CD8-positive, alpha-beta T cell (primary cell): ENCODE measurements at regions of chr5 and their contacts with region 1.

Region 1: DNA sequence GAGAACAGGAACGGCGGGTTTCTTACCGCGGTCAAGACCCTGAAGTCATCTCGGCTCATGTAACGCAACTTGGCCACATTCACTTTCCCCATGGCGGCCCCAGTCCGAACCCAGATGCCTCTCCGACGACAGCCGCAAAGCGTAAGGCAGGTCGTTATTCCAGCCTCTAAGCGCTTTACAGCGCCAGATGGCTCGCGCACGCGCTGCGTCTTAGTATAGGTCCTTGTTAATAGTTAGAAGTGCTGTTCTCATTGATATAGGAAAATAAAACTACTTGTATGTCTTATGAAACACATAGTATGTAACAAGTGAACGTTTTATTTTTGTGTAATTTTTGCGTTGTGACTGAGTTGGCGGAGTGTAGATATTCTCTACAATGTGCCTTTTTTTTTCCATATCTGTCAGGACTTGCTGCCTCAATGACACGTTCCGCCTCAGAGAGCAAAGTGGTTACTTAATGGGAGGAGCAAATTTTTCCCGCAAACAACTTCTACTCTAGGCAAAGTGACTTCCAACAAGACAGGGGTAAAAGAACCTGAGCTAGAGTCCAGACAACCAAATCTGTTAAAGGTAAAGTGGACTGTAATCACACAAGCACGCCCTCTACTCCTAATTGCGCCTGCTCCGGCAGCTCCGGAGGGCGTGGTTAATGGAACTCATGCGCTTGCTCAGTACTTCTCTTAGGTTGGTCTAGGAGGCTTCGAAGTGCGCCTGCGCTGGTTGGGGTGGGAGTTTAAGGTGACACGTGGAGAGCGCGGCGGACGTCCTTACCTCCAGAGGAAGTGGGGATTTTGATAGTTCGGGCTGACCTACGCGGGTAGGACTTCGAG is at the start of gene RIOK2:
- DNase-seq: peak; percentile 81 to 96 (median 91)
- ATAC-seq: peak; percentile 90
- H3K4me3 ChIP-seq: peak within 1 kb of the TSS; percentile 50 to 89
- H3K4me3 Mint-ChIP-seq: peak within 1 kb of the TSS; percentile 96
- H3K27ac ChIP-seq: peak within 1 kb of the TSS; percentile 89 to 98
- H3K27ac Mint-ChIP-seq: peak within 1 kb of the TSS; percentile 100
- H3K4me1 ChIP-seq: peaks cover 13% of the 10 kb centered on the region
- H3K4me1 Mint-ChIP-seq: peaks cover 38% of the 10 kb centered on the region
- H3K27me3 ChIP-seq: no peaks in the 10 kb centered on the region
- H3K27me3 Mint-ChIP-seq: no peaks in the 10 kb centered on the region
- CTCF ChIP-seq: no peak
- total RNA-seq, gene RIOK2: 29.2 to 29.6 TPM

Region 2: GRCh38 chr5:95554647-95555548 is 1628.4 kb before region 1 on chr5 and contains the starts of genes ARSK and SKIC3:
- CTCF ChIA-PET with region 1: no interaction called
- POLR2A ChIA-PET with region 1: no interaction called
- intact Hi-C with region 1: loop called (anchors 5 kb)
- DNase-seq: peak; percentile 80 to 99 (median 91)
- ATAC-seq: peak; percentile 86
- H3K4me3 ChIP-seq: peak within 1 kb of the TSS; percentile 64 to 77
- H3K4me3 Mint-ChIP-seq: peak within 1 kb of the TSS; percentile 96
- H3K27ac ChIP-seq: peak within 1 kb of the TSS; percentile 74 to 84
- H3K27ac Mint-ChIP-seq: peak within 1 kb of the TSS; percentile 98
- H3K4me1 ChIP-seq: peaks cover 18% of the 10 kb centered on the region
- H3K4me1 Mint-ChIP-seq: peaks cover 47% of the 10 kb centered on the region
- H3K27me3 ChIP-seq: no peaks in the 10 kb centered on the region
- H3K27me3 Mint-ChIP-seq: no peaks in the 10 kb centered on the region
- CTCF ChIP-seq: no peak
- total RNA-seq, gene ARSK: 2.6 to 3.1 TPM
- total RNA-seq, gene SKIC3: 46.7 to 51.8 TPM

Region 3: GRCh38 chr5:95646554-95647431 is 1536.5 kb before region 1 on chr5 and contains the start of gene RFESD:
- CTCF ChIA-PET with region 1: no interaction called
- POLR2A ChIA-PET with region 1: no interaction called
- intact Hi-C with region 1: loop called in 1 of 2 experiments (anchors 10 kb)
- DNase-seq: peak; percentile 86 to 96 (median 93)
- ATAC-seq: peak; percentile 93
- H3K4me3 ChIP-seq: peak within 1 kb of the TSS; percentile 67 to 77
- H3K4me3 Mint-ChIP-seq: peak within 1 kb of the TSS; percentile 91
- H3K27ac ChIP-seq: peak within 1 kb of the TSS; percentile 76 to 85
- H3K27ac Mint-ChIP-seq: peak within 1 kb of the TSS; percentile 94
- H3K4me1 ChIP-seq: peaks cover 20% of the 10 kb centered on the region
- H3K4me1 Mint-ChIP-seq: peaks cover 40% of the 10 kb centered on the region
- H3K27me3 ChIP-seq: no peaks in the 10 kb centered on the region
- H3K27me3 Mint-ChIP-seq: no peaks in the 10 kb centered on the region
- CTCF ChIP-seq: peak; percentile 22
- total RNA-seq, gene RFESD: 1.00 to 1.7 TPM

Region 4: DNA sequence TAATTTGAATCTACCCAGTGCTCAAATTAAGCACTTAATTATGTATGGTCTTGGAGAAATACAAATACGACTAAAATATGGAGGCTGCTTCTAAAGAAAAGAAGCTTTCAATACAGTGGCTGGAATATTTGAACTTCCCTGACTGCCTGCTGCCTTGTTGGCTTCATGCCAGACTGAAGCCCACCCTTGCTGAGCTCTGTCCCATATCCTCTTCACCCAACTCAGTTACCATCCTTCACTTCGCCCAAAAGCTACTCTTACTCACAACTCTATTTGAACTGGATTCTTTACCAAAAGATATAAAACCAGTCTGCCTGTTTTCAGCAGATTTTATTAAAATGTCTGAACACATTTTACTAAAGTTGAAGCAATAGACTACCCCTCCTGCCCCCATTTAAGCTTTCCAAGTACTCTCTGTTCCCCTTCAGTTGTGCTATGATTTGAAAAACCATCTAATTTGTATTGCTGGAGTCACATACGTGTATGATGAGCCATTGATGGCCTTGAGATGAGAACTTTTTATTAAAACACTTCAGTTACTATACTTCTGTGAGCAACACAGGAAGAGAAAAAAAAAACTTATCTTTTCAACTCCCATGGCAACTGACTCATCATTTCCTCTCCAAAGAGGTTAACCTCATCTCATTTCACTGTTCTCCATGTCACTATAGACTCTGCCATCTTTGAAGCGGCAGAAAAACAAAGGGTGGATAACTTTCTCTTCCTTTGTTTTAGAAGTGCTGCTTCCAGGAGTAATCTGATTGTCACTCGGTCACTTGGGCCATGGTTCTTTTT is 646.1 kb before region 1 on chr5:
- CTCF ChIA-PET with region 1: no interaction called
- POLR2A ChIA-PET with region 1: no interaction called
- intact Hi-C with region 1: loop called in 1 of 2 experiments (anchors 10 kb)
- DNase-seq: peak in 2 of 9 experiments; percentile 73 to 83
- ATAC-seq: peak; percentile 87
- H3K4me3 ChIP-seq: peak overlapping the region in 1 of 2 experiments; percentile 6
- H3K4me3 Mint-ChIP-seq: peak overlapping the region; percentile 46
- H3K27ac ChIP-seq: peak overlapping the region; percentile 10 to 55
- H3K27ac Mint-ChIP-seq: peak overlapping the region; percentile 81
- H3K4me1 ChIP-seq: peaks cover 24% of the 10 kb centered on the region
- H3K4me1 Mint-ChIP-seq: peaks cover 27% of the 10 kb centered on the region
- H3K27me3 ChIP-seq: no peaks in the 10 kb centered on the region
- H3K27me3 Mint-ChIP-seq: no peaks in the 10 kb centered on the region
- CTCF ChIP-seq: no peak

Region 5: DNA sequence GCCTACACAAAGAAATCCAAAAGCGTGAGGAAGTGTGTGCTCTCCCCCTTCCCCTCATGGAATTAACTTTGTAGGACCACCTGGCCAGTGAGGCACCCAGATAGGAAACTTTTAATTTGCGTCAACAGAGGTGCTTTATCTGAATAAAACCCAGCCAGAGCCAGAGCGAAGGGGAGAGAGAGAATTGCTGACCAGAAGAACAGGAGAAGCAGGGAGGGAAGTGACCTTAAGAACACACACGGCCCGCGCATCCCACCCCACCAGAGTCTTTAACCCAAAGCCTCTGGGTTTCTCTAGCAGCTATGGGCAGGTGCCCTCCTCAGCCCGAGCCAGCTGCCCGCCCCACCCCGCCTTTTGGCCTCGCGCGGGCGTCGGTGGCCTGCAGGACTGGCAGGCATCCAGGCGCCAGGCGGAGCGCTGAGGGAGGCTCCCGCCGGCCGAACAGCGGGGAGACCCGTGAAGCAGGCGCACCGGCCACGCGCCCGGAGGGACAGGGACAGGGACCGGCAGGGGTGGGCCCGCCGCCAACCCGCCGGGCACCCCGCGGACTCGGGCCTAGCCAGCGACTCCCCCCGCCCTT is 376.1 kb before region 1 on chr5:
- CTCF ChIA-PET with region 1: interaction called, 4 read pairs
- POLR2A ChIA-PET with region 1: interaction called, 5 read pairs
- intact Hi-C with region 1: loop called (anchors 1 to 5 kb)
- DNase-seq: peak in 2 of 9 experiments; percentile 9 to 32
- ATAC-seq: no peak
- H3K4me3 ChIP-seq: peak overlapping the region; percentile 71 to 85
- H3K4me3 Mint-ChIP-seq: peak overlapping the region; percentile 95
- H3K27ac ChIP-seq: peak overlapping the region; percentile 93 to 96
- H3K27ac Mint-ChIP-seq: peak overlapping the region; percentile 98
- H3K4me1 ChIP-seq: peaks cover 70% of the 10 kb centered on the region
- H3K4me1 Mint-ChIP-seq: peaks cover 82% of the 10 kb centered on the region
- H3K27me3 ChIP-seq: no peaks in the 10 kb centered on the region
- H3K27me3 Mint-ChIP-seq: no peaks in the 10 kb centered on the region
- CTCF ChIP-seq: no peak

Region 6: GRCh38 chr5:98773464-98774191 is 1590.3 kb after region 1 on chr5 and contains the start of gene RGMB:
- CTCF ChIA-PET with region 1: no interaction called
- POLR2A ChIA-PET with region 1: interaction called, 4 read pairs
- intact Hi-C with region 1: loop called (anchors 2 to 5 kb)
- DNase-seq: peak; percentile 71 to 92 (median 89)
- ATAC-seq: peak; percentile 86
- H3K4me3 ChIP-seq: peak within 1 kb of the TSS; percentile 69 to 70
- H3K4me3 Mint-ChIP-seq: peak within 1 kb of the TSS; percentile 95
- H3K27ac ChIP-seq: peak within 1 kb of the TSS; percentile 37 to 53
- H3K27ac Mint-ChIP-seq: peak within 1 kb of the TSS; percentile 87
- H3K4me1 ChIP-seq: peaks cover 41% of the 10 kb centered on the region
- H3K4me1 Mint-ChIP-seq: peaks cover 56% of the 10 kb centered on the region
- H3K27me3 ChIP-seq: peaks cover 0 to 12% of the 10 kb centered on the region in 2 experiments
- H3K27me3 Mint-ChIP-seq: peaks cover 24% of the 10 kb centered on the region
- CTCF ChIP-seq: no peak
- total RNA-seq, gene RGMB: 5.8 to 6.6 TPM

Region 7: GRCh38 chr5:99032234-99033013 is 1849.1 kb after region 1 on chr5:
- CTCF ChIA-PET with region 1: no interaction called
- POLR2A ChIA-PET with region 1: no interaction called
- intact Hi-C with region 1: loop called (anchors 10 kb)
- DNase-seq: peak in 4 of 9 experiments; percentile 22 to 58 (median 36)
- ATAC-seq: peak; percentile 28
- H3K4me3 ChIP-seq: peak overlapping the region; percentile 31 to 51
- H3K4me3 Mint-ChIP-seq: peak overlapping the region; percentile 86
- H3K27ac ChIP-seq: peak overlapping the region; percentile 30 to 95
- H3K27ac Mint-ChIP-seq: peak overlapping the region; percentile 97
- H3K4me1 ChIP-seq: peaks cover 43% of the 10 kb centered on the region
- H3K4me1 Mint-ChIP-seq: peaks cover 65% of the 10 kb centered on the region
- H3K27me3 ChIP-seq: no peaks in the 10 kb centered on the region
- H3K27me3 Mint-ChIP-seq: no peaks in the 10 kb centered on the region
- CTCF ChIP-seq: peak; percentile 25